ENCODE measurements at regions of chr1 and their contacts with region 1.

Region 1: DNA sequence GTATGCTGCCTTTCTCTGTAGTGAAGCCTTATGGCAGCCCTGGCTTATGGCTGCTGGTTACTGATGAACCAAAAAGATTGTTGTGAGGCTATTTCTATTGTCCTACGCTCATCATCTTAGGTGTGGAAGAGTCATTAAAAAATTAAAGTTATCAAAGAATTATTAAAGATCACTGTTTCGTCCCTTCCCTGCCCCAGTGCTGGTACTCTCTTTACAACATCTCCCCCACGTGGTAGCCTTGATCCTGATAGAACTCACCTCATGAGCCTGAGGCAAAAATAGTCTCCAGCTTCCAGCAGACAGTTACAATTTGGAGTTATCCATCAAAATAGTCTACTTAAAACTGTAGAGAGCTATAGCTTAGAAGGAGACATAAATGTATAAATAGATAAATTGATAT is 201.5 kb downstream of the S1PR1 start:
- DNase-seq: peak; percentile 39
- H3K4me3 ChIP-seq: no peak overlapping the region
- H3K27ac ChIP-seq: no peak overlapping the region
- H3K4me1 ChIP-seq: peaks cover 33% of the 10 kb centered on the region
- CTCF ChIP-seq: peak; percentile 78

Region 2: DNA sequence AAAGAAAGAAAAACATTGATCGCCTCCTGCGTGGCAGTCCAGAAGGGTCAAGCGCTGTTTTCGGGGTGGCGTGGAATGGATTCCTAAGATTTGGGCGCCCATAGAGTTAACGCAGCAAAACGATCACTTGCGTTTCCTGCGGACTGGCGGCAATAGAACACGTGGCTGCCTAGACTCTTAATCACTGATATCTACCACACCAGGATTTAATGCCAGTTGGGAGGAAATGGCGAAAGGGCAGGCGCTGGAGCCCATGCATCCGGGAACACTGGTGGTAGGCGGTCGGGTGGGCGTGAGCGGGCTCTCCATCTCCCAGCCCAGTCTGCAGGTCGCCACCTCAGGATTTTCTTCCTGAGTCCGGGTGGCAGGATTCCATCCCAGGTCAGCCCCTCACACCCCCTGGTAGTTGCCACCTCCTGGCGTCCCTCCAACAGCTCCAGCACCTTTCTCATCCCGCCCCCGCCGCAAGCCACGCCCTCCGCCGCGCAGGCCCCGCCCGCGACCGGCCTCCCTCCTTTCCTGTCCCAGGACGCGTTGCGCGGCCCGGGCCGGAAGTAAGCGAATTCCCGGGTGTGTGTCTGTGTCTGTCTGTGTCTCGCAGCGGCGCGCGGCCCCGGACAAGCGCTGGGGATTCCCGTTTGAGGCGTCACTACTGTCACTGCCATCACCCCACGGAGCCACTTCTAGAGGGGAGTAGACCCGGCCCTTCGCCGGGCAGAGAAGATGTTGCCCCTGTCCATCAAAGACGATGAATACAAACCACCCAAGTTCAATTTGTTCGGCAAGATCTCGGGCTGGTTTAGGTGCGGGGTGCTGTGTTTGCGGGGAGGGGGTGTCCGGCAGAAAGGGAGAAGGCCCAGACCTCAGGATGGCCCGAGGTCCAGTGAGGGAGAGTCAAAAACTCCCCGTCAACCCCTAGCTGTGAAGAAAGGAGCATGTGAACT is 542.5 kb before region 1 on chr1 and contains the start of gene SLC30A7:
- CTCF ChIA-PET with region 1: no interaction called
- POLR2A ChIA-PET with region 1: no interaction called
- intact Hi-C with region 1: loop called (anchors 10 kb)
- DNase-seq: peak; percentile 88
- H3K4me3 ChIP-seq: peak within 1 kb of the TSS; percentile 99
- H3K27ac ChIP-seq: peak within 1 kb of the TSS; percentile 77
- H3K4me1 ChIP-seq: peaks cover 30% of the 10 kb centered on the region
- CTCF ChIP-seq: no peak
- total RNA-seq, gene SLC30A7: 5.5 and 8.6 TPM in 2 replicates

Region 3: GRCh38 chr1:101247404-101248287 is 190.7 kb before region 1 on chr1:
- CTCF ChIA-PET with region 1: no interaction called
- POLR2A ChIA-PET with region 1: interaction called, 5 read pairs
- intact Hi-C with region 1: loop called (anchors 1 kb)
- DNase-seq: peak; percentile 95
- H3K4me3 ChIP-seq: peak overlapping the region; percentile 36
- H3K27ac ChIP-seq: peak overlapping the region; percentile 85
- H3K4me1 ChIP-seq: peaks cover 63% of the 10 kb centered on the region
- CTCF ChIP-seq: no peak

Region 4: DNA sequence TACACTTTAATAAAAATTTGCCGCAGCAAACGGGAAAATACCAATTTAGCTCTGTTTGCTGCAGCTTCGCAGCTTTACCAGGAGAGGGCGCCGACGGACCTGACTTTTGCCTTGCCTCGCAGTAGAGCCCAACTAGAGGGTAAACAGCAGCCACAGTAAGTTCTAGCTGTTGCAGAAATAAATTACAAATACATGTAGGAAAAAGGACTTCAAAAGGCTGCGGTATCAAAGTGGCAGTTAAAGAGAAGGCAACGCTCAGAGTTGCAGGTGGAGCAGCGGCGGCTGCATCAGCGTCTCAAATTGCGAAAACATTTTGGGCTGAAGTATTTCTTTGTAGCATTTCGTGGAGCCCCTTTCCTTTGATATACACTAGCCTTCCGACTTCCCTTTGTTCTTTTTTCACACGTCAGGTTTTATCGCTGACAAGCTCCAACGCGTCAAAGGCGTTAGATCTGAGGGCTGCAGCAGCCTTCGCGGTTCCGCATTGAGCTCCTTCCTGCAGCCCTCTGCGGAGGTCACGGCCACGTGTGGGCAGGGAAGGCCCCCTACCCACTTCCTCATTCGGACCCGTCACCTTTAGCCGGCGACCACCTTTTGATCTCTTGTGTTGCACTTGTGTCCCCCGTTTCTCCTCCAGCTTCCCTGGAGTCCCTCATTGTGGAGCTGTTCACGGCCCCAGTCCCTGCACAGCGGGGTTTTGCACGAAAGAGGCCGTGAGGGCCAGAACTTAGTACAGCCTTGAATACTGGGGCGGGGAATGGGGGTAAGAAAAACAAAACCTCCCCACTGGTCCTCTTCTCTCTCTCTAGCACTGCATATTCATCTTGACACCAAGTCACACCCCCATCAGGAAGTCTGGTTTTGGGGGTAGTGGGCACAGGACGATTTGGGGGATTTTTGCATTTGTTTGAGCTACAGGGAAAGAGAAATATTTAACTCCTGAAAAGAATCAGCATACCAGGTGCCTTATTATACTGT is 128.7 kb before region 1 on chr1:
- CTCF ChIA-PET with region 1: interaction called, 17 read pairs
- POLR2A ChIA-PET with region 1: interaction called, 9 read pairs
- intact Hi-C with region 1: loop called (anchors 1 kb)
- DNase-seq: peak; percentile 70
- H3K4me3 ChIP-seq: peak overlapping the region; percentile 18
- H3K27ac ChIP-seq: no peak overlapping the region
- H3K4me1 ChIP-seq: peaks cover 24% of the 10 kb centered on the region
- CTCF ChIP-seq: peak; percentile 94

Region 5: GRCh38 chr1:101357444-101357986 is 80.8 kb before region 1 on chr1:
- CTCF ChIA-PET with region 1: interaction called, 3 read pairs
- POLR2A ChIA-PET with region 1: interaction called, 5 read pairs
- intact Hi-C with region 1: loop called (anchors 1 kb)
- DNase-seq: peak; percentile 77
- H3K4me3 ChIP-seq: no peak overlapping the region
- H3K27ac ChIP-seq: no peak overlapping the region
- H3K4me1 ChIP-seq: no peaks in the 10 kb centered on the region
- CTCF ChIP-seq: peak; percentile 95

Region 6: DNA sequence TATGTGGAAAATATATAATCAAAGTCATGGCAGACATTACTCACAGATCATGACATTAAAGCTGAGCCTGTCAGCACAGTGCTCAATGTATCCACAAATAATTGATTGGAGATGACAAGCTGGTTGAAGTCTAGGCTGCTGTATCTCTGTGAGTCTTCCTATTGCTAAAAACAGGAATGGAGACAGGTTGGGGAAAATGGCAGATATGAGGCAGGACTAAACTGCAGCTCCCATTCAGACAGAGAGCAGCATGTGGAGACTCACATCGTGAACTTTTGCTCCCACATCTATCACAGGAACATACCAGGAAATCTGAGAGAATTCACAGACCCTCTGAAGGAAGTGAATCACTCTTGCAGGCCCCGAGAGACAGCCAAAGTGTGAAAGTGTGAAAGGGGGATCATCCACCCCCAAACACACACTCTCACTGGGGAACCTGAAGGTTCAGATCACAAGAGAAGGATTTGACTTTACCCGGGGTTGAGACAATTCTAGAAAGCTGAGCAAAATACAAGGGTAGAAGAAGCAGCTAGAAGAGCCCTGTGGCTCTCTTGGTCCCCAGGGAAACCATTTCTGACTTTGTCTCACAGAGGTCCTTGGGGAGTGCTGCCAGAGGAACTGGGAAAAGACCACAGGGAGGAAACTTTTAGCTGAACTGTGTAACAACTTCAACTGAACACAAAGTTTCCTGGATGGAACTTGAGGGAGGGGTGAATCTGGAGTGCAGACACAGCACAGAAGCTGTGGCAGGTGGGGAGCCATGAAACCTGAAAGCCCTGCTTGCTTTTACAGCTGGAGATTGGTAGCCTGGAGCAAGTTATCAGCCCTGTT is 28.1 kb before region 1 on chr1:
- CTCF ChIA-PET with region 1: interaction called, 6 read pairs
- POLR2A ChIA-PET with region 1: interaction called, 20 read pairs
- intact Hi-C with region 1: loop called (anchors 1 kb)
- DNase-seq: peak; percentile 30
- H3K4me3 ChIP-seq: no peak overlapping the region
- H3K27ac ChIP-seq: no peak overlapping the region
- H3K4me1 ChIP-seq: peaks cover 55% of the 10 kb centered on the region
- CTCF ChIP-seq: no peak

Region 7: DNA sequence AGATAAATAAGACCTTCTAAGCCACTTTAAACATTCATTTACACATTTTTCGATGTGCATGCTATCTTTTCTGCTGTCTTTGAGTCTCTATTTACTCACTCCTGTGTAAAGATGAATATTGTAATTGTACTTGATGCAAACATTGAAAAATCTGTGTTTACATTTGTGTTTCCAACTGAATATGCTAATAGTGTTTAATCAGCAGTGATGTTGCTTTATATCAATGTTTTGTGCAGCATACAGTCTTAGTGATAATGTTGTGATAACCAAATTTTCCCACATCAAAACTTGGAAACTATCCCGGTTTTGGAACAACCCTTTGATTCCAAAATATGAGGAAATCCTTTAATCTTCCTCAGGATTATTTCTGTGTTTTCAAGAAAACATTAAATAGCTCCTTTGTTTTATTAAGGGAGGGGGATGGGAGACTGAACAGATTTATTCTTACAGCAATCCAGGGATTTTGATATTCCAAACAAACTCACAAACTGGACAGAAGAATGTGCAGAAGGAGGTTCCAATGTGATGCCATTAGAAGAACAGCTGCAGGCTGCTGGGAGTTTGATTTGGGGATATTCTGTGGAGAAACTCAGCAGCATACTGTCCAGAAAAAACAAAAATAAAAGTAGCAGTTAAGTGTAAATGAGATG is 46.5 kb after region 1 on chr1:
- CTCF ChIA-PET with region 1: no interaction called
- POLR2A ChIA-PET with region 1: no interaction called
- intact Hi-C with region 1: no loop called
- DNase-seq: no peak
- H3K4me3 ChIP-seq: no peak overlapping the region
- H3K27ac ChIP-seq: no peak overlapping the region
- H3K4me1 ChIP-seq: no peaks in the 10 kb centered on the region
- CTCF ChIP-seq: no peak